ENCODE measurements at regions of chr15 and their contacts with region 1.

Region 1: GRCh38 chr15:79989682-79990081 is 18.7 kb upstream of the BCL2A1 start:
- DNase-seq: no peak
- ATAC-seq: no peak
- H3K4me3 ChIP-seq: no peak overlapping the region
- H3K4me3 Mint-ChIP-seq: no peak overlapping the region
- H3K27ac ChIP-seq: no peak overlapping the region
- H3K27ac Mint-ChIP-seq: no peak overlapping the region
- H3K4me1 ChIP-seq: no peaks in the 10 kb centered on the region
- H3K4me1 Mint-ChIP-seq: peaks cover 4% of the 10 kb centered on the region
- H3K27me3 ChIP-seq: no peaks in the 10 kb centered on the region
- H3K27me3 Mint-ChIP-seq: no peaks in the 10 kb centered on the region
- CTCF ChIP-seq: no peak

Region 2: GRCh38 chr15:79380755-79381497 is 608.8 kb before region 1 on chr15:
- CTCF ChIA-PET with region 1: interaction called, 49 read pairs
- POLR2A ChIA-PET with region 1: no interaction called
- intact Hi-C with region 1: loop called in 1 of 2 experiments (anchors 1 kb)
- DNase-seq: peak; percentile 53 to 84 (median 76)
- ATAC-seq: peak; percentile 76
- H3K4me3 ChIP-seq: no peak overlapping the region
- H3K4me3 Mint-ChIP-seq: no peak overlapping the region
- H3K27ac ChIP-seq: no peak overlapping the region
- H3K27ac Mint-ChIP-seq: no peak overlapping the region
- H3K4me1 ChIP-seq: no peaks in the 10 kb centered on the region
- H3K4me1 Mint-ChIP-seq: peaks cover 4% of the 10 kb centered on the region
- H3K27me3 ChIP-seq: no peaks in the 10 kb centered on the region
- H3K27me3 Mint-ChIP-seq: no peaks in the 10 kb centered on the region
- CTCF ChIP-seq: peak; percentile 78

Region 3: DNA sequence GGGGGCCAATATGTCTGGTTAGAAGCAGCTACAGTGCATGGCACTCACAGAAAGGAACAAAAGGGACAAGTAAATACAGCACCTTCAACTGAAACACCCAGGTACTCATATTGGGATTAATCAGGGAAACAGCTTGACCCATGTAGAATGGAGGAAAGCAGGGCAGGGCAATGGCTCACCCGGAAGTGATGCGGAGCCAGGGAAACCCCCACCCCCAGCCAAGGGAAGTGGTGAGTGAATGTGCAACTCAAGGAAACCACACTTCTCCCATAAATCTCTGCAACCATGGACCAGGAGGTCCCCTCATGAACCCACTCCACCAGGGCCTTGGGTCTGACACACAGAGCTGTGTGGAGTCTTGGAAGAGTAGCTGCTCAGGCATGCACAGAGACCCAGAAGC is 209.9 kb before region 1 on chr15:
- CTCF ChIA-PET with region 1: no interaction called
- POLR2A ChIA-PET with region 1: no interaction called
- intact Hi-C with region 1: loop called in 1 of 2 experiments (anchors 10 kb)
- DNase-seq: peak in 2 of 9 experiments; percentile 3 to 15
- ATAC-seq: no peak
- H3K4me3 ChIP-seq: no peak overlapping the region
- H3K4me3 Mint-ChIP-seq: no peak overlapping the region
- H3K27ac ChIP-seq: no peak overlapping the region
- H3K27ac Mint-ChIP-seq: no peak overlapping the region
- H3K4me1 ChIP-seq: no peaks in the 10 kb centered on the region
- H3K4me1 Mint-ChIP-seq: no peaks in the 10 kb centered on the region
- H3K27me3 ChIP-seq: no peaks in the 10 kb centered on the region
- H3K27me3 Mint-ChIP-seq: peaks cover 17% of the 10 kb centered on the region
- CTCF ChIP-seq: no peak

Region 4: DNA sequence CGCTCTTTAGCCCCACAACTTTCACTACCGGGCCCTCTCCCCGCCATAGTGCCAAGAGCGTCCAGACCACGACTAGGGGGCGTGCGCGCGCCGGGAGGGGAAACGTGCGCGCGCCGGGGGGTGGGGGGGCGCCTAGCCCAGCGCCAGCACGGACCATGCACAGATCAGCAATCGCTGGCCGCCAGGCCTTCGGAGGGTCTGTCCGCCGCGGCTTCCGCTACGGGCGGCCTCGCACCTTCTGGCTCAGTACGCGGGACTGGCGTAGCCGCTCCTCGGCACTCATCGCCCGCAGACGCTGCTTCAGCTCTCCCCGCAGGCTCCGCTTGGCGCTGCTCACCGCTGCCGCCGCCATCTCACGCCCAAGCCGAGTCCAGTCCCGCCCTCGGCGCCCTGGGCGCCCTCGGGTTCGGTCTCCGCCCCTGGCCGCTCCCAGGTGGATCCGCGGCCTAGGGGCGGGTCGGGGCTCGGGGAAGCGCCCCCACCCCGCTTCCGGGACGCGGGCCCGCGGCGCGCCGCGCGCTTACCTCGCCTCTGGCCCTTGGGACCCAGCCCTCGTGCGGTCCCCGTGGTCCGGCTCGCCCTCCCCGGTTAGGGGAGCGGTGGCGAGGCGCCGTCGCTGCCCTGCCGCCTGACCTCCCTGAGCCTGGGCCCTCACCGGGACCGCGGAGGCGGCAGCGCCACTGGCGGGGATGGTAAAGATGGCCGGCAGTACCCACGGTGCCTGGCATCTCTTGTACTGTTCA is 92.9 kb before region 1 on chr15 and contains the start of gene MTHFS:
- CTCF ChIA-PET with region 1: interaction called, 22 read pairs
- POLR2A ChIA-PET with region 1: interaction called, 4 read pairs
- intact Hi-C with region 1: loop called (anchors 1 kb)
- DNase-seq: peak; percentile 61 to 91 (median 79)
- ATAC-seq: peak; percentile 84
- H3K4me3 ChIP-seq: peak within 1 kb of the TSS; percentile 75 to 96
- H3K4me3 Mint-ChIP-seq: peak within 1 kb of the TSS; percentile 96
- H3K27ac ChIP-seq: peak within 1 kb of the TSS; percentile 94 to 95
- H3K27ac Mint-ChIP-seq: peak within 1 kb of the TSS; percentile 100
- H3K4me1 ChIP-seq: peaks cover 28% of the 10 kb centered on the region
- H3K4me1 Mint-ChIP-seq: peaks cover 40% of the 10 kb centered on the region
- H3K27me3 ChIP-seq: no peaks in the 10 kb centered on the region
- H3K27me3 Mint-ChIP-seq: no peaks in the 10 kb centered on the region
- CTCF ChIP-seq: peak; percentile 36
- total RNA-seq, gene MTHFS: 5.1 to 7.8 TPM

Region 5: DNA sequence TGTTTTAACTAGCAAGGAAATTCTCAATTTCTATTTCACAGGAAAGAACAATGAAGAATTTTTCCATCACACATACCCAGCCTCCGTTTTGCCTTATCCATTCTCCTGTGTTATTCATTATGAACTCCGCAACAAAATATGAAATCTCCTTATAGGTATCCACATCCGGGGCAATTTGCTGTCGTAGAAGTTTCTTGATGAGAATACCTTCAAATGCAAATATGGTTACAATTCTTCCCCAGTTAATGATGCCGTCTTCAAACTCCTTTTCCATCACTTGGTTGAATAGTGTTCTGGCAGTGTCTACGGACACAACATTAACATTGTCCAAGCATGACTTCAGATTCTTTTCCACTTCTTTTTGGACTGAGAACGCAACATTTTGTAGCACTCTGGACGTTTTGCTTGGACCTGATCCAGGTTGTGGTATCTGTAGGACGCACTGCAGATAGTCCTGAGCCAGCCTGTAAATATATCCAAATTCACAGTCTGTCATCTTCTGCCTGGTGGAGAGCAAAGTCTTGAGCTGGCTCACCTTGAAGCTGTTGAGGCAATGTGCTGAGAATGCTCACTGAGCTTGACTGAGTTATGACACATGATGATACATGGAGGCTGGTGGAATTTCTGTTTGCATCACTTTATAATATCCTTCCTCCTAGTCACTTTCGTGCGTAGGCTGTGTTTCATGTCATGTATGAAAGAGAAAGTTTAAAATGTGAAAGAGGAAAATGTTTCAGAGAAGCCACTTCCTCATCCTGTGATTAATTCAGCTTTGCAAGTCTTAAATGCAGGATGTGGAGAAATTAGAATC is 18.9 kb before region 1 on chr15 and contains the start of gene BCL2A1:
- CTCF ChIA-PET with region 1: interaction called, 7 read pairs
- POLR2A ChIA-PET with region 1: no interaction called
- intact Hi-C with region 1: loop called in 1 of 2 experiments (anchors 1 kb)
- DNase-seq: peak in 8 of 9 experiments; percentile 7 to 86 (median 55)
- ATAC-seq: peak; percentile 85
- H3K4me3 ChIP-seq: peak within 1 kb of the TSS; percentile 59 to 68
- H3K4me3 Mint-ChIP-seq: peak within 1 kb of the TSS; percentile 92
- H3K27ac ChIP-seq: peak within 1 kb of the TSS; percentile 73 to 76
- H3K27ac Mint-ChIP-seq: peak within 1 kb of the TSS; percentile 96
- H3K4me1 ChIP-seq: peaks cover 40% of the 10 kb centered on the region
- H3K4me1 Mint-ChIP-seq: peaks cover 57% of the 10 kb centered on the region
- H3K27me3 ChIP-seq: no peaks in the 10 kb centered on the region
- H3K27me3 Mint-ChIP-seq: no peaks in the 10 kb centered on the region
- CTCF ChIP-seq: no peak
- total RNA-seq, gene BCL2A1: 24.5 to 27.1 TPM

Region 6: GRCh38 chr15:80136854-80137253 is 147.2 kb after region 1 on chr15:
- CTCF ChIA-PET with region 1: no interaction called
- POLR2A ChIA-PET with region 1: no interaction called
- intact Hi-C with region 1: no loop called
- DNase-seq: no peak
- ATAC-seq: no peak
- H3K4me3 ChIP-seq: no peak overlapping the region
- H3K4me3 Mint-ChIP-seq: no peak overlapping the region
- H3K27ac ChIP-seq: no peak overlapping the region
- H3K27ac Mint-ChIP-seq: no peak overlapping the region
- H3K4me1 ChIP-seq: no peaks in the 10 kb centered on the region
- H3K4me1 Mint-ChIP-seq: no peaks in the 10 kb centered on the region
- H3K27me3 ChIP-seq: no peaks in the 10 kb centered on the region
- H3K27me3 Mint-ChIP-seq: no peaks in the 10 kb centered on the region
- CTCF ChIP-seq: no peak

Measured in CD8-positive, alpha-beta T cell (primary cell).